CD8-positive, alpha-beta T cell (primary cell): ENCODE measurements at regions of chr19 and their contacts with region 1.

Region 1: DNA sequence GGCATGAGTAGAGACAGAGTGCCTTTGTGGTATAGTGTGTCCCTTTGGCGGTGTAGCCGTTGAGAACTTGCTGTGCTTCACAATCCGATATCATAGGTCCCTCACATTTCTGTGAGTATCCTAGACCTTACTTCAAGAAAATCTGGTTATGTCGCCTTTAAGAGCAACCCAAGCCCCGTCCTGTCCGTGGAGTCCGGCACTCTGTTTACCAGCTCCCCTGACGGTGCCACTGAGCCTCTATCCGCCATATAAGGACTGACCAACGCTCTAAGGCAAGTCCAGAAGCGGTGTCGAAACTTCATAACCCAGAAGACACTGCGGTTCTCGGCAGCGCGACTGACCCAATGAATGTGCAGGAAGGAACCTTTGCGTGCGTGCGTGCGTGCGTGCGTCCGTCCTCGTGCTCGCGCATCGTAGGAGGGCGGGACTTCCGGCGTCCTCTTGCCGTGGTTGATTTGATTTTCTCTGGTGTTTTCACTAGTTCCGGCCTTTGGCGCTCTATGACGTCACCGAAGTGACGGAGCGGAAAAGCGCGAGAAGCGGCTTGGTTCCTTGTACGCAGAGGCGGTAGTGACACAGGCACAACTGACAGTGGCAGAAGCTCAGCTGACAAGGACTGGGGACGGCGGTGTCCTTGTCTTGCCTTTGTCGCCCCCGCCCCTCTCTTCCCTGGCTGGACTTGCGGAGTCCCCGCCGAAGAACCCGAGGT is at the starts of genes TRAPPC2B and ZNF547:
- DNase-seq: peak; percentile 96 to 99 (median 99)
- ATAC-seq: peak; percentile 89
- H3K4me3 ChIP-seq: peak within 1 kb of the TSS; percentile 63 to 66
- H3K4me3 Mint-ChIP-seq: peak within 1 kb of the TSS; percentile 86
- H3K27ac ChIP-seq: peak within 1 kb of the TSS; percentile 81 to 95
- H3K27ac Mint-ChIP-seq: peak within 1 kb of the TSS; percentile 98
- H3K4me1 ChIP-seq: peaks cover 12% of the 10 kb centered on the region
- H3K4me1 Mint-ChIP-seq: peaks cover 18% of the 10 kb centered on the region
- H3K27me3 ChIP-seq: no peaks in the 10 kb centered on the region
- H3K27me3 Mint-ChIP-seq: no peaks in the 10 kb centered on the region
- CTCF ChIP-seq: no peak
- total RNA-seq, gene TRAPPC2B: 8.6 to 9.9 TPM
- total RNA-seq, gene ZNF547: 0.72 to 0.81 TPM

Region 2: DNA sequence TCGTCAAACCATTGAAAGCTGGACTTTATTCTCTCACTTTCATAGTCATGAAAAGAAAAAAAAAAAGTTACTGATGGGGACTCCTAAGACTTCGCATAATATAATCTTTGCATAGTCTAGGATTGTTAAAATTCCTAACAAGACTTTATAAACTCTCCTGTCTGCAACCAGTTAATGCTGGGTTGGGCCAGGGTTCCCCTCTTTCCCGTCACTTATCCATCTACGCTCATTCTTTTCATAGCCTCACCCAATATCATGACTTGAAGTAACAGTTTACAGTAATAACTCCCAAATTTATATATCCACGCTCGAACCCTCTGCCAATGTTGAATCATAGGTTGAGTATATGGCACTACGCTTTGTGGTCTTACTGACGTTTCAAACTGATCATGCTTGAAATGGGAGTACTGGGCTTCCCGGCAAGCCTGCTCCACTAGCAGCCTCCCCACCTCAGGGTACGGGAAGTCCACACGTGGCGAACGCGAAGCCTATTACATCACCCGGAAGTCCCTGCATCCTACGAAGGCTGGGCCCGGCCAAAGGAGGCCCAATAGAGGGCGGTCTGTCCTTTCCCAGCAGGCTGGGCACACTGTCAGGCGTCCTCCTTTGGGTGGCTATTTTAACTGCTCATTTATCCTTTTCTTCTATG is 83.6 kb before region 1 on chr19:
- CTCF ChIA-PET with region 1: no interaction called
- POLR2A ChIA-PET with region 1: no interaction called
- intact Hi-C with region 1: loop called (anchors 1 kb)
- DNase-seq: peak; percentile 55 to 94 (median 75)
- ATAC-seq: peak; percentile 64
- H3K4me3 ChIP-seq: peak overlapping the region; percentile 54 to 99
- H3K4me3 Mint-ChIP-seq: no peak overlapping the region
- H3K27ac ChIP-seq: peak overlapping the region; percentile 86 to 93
- H3K27ac Mint-ChIP-seq: no peak overlapping the region
- H3K4me1 ChIP-seq: peaks cover 28% of the 10 kb centered on the region
- H3K4me1 Mint-ChIP-seq: peaks cover 33% of the 10 kb centered on the region
- H3K27me3 ChIP-seq: no peaks in the 10 kb centered on the region
- H3K27me3 Mint-ChIP-seq: no peaks in the 10 kb centered on the region
- CTCF ChIP-seq: no peak

Region 3: DNA sequence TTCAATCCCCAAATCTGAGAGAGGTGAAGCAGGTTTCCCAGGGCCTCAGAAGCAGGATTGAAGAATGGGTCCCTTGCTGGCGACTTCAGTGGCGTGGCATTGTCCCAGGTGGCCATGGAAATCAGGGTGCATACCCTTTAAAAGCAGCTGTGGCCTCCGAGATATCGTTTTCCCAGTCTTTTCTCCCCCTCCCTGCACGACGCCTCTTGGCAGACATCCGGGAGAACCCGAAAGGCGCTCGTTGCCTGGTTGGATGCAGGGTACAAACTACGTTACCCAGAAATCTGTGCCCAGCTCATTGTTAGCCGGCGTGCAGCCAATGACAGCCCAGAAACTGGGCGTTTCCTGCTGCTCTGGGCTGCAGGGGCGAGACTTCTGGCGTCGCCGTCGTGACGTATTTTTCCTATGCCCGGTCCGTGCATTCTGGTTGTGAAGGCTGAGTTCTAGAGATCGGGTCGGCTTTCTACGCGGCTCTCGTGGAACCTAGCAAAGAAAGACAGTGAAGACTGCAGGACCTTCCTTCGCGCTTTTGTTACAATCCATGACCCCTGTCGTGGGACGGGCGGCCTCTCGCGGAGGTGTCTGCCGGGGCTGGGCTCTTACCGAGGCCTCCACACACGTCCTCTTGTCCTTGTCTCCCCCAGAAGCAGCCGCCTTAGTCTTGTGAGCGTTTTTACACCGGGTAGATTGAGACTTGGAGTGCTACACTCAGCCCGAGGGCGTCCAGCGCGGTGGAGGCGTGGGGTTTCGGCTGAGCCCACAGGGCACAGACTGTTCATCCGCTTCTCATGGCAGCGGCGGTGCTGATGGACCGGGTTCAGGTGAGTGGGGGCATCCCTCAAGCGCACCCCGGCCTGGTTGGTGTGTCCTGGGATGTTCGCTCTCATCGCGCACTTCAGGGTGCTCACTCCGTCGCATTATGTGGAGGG is 12.0 kb before region 1 on chr19 and contains the start of gene ZNF304:
- CTCF ChIA-PET with region 1: no interaction called
- POLR2A ChIA-PET with region 1: interaction called, 3 read pairs
- intact Hi-C with region 1: loop called (anchors 1 kb)
- DNase-seq: peak; percentile 58 to 93 (median 81)
- ATAC-seq: peak; percentile 99
- H3K4me3 ChIP-seq: peak within 1 kb of the TSS; percentile 79 to 87
- H3K4me3 Mint-ChIP-seq: peak within 1 kb of the TSS; percentile 96
- H3K27ac ChIP-seq: peak within 1 kb of the TSS; percentile 68 to 73
- H3K27ac Mint-ChIP-seq: peak within 1 kb of the TSS; percentile 93
- H3K4me1 ChIP-seq: peaks cover 13% of the 10 kb centered on the region
- H3K4me1 Mint-ChIP-seq: peaks cover 32% of the 10 kb centered on the region
- H3K27me3 ChIP-seq: peaks cover 0 to 4% of the 10 kb centered on the region in 2 experiments
- H3K27me3 Mint-ChIP-seq: no peaks in the 10 kb centered on the region
- CTCF ChIP-seq: no peak
- total RNA-seq, gene ZNF304: 8.6 TPM

Region 4: GRCh38 chr19:57477191-57478008 is 114.2 kb after region 1 on chr19 and contains the start of gene ZNF772:
- CTCF ChIA-PET with region 1: no interaction called
- POLR2A ChIA-PET with region 1: no interaction called
- intact Hi-C with region 1: loop called (anchors 1 kb)
- DNase-seq: peak; percentile 76 to 95 (median 88)
- ATAC-seq: peak; percentile 99
- H3K4me3 ChIP-seq: peak within 1 kb of the TSS; percentile 78 to 86
- H3K4me3 Mint-ChIP-seq: peak within 1 kb of the TSS; percentile 88
- H3K27ac ChIP-seq: peak within 1 kb of the TSS; percentile 47 to 83
- H3K27ac Mint-ChIP-seq: peak within 1 kb of the TSS; percentile 92
- H3K4me1 ChIP-seq: peaks cover 8% of the 10 kb centered on the region
- H3K4me1 Mint-ChIP-seq: peaks cover 14% of the 10 kb centered on the region
- H3K27me3 ChIP-seq: peaks cover 0 to 2% of the 10 kb centered on the region in 2 experiments
- H3K27me3 Mint-ChIP-seq: peaks cover 2% of the 10 kb centered on the region
- CTCF ChIP-seq: peak; percentile 65
- total RNA-seq, gene ZNF772: 0.41 to 0.97 TPM

Region 5: DNA sequence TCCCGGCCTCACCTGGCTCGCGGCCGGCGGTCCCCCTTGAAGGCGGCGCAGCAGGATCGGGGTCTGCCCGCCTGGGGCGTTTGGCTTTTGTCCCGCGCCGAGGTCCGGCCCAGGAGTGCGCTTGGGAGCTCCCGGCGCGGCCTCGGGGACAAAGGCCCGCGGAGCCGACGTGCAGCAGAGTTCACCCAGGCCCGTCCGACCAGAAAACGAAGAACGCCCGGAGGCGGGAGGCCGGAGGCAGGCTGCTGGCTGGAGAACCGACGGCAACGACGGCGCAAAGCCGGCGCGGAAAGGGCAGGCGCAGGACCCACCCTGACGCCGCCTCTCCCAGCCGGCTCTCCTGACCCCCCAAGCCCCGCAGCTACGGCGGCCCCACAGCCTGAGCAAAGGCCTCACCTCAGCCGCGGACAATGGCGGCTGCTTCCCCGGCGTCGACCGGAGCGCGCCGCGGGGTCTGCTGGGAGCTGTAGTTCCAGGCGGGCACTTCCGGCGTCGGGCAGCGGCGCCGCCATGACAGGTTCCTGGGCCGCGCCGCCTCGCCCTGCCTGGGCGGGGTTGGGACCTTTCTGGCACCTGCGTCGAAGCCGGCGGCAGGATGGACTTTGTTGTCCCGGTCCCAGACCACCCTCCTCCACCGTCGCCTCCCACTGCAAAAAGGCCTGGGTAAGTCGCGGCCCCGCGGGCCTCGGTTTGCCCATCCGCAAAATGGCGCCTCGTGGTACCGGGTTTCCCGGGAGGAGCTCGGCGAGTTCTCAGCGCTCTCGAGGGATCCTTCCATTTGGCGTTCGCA is 639.4 kb after region 1 on chr19 and contains the start of gene ZNF606:
- CTCF ChIA-PET with region 1: no interaction called
- POLR2A ChIA-PET with region 1: no interaction called
- intact Hi-C with region 1: loop called in 1 of 2 experiments (anchors 10 kb)
- DNase-seq: peak; percentile 72 to 93 (median 84)
- ATAC-seq: peak; percentile 94
- H3K4me3 ChIP-seq: peak within 1 kb of the TSS; percentile 90 to 93
- H3K4me3 Mint-ChIP-seq: peak within 1 kb of the TSS; percentile 87
- H3K27ac ChIP-seq: peak within 1 kb of the TSS; percentile 82 to 93
- H3K27ac Mint-ChIP-seq: peak within 1 kb of the TSS; percentile 94
- H3K4me1 ChIP-seq: peaks cover 20% of the 10 kb centered on the region
- H3K4me1 Mint-ChIP-seq: peaks cover 34% of the 10 kb centered on the region
- H3K27me3 ChIP-seq: no peaks in the 10 kb centered on the region
- H3K27me3 Mint-ChIP-seq: no peaks in the 10 kb centered on the region
- CTCF ChIP-seq: no peak
- total RNA-seq, gene ZNF606: 11.2 to 13.0 TPM